SK-N-SH (cell line): ENCODE measurements at regions of chr1 and their contacts with region 1.

Region 1: DNA sequence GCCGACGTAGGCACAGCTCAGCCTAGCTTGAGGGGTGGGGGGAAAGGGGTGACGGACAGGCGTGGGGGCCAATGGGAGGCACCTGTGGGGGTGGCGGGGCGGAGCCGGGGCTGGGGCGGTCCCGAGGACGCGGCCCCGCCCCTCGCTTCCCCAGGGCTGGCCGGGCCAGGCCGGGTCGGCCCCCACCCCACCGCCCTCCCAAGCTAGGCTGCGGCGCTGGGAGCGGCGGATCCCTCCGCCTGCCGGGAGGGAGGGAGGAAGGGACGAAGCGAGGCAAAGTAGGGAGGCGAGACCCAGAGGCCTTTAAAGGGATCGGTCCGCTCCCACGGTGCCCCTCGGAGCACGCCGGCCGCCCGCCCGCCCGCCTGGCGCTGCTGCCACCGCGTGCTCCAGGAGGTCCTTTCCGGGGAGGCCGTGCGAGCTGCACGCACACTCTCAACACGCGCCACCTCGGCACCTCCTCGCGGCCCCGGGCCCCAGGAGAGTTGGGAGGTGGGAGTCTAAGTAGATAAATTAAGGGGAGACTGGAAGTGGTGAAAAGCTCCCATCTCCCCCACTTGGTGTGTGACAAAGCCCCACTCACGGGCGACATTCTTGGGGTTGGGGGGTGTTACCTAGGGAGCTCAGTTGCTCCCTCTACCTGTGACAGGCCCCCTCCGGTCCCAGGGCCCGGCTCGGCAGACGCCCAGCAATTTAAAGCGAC is 373 bp upstream of the MEF2D start:
- DNase-seq: peak; percentile 99
- H3K4me3 ChIP-seq: peak overlapping the region; percentile 89 to 97
- H3K27ac ChIP-seq: peak overlapping the region; percentile 98 to 100
- H3K4me1 ChIP-seq: peaks cover 59 to 76% of the 10 kb centered on the region in 2 experiments
- H3K27me3 ChIP-seq: no peaks in the 10 kb centered on the region
- CTCF ChIP-seq: peak; percentile 59
- EP300 ChIP-seq: 0 out of 4 replicates have a peak, but pooled peaks of 1 of the 2 experiments have one; percentile 38
- RAD21 ChIP-seq: peak; percentile 35

Region 2: DNA sequence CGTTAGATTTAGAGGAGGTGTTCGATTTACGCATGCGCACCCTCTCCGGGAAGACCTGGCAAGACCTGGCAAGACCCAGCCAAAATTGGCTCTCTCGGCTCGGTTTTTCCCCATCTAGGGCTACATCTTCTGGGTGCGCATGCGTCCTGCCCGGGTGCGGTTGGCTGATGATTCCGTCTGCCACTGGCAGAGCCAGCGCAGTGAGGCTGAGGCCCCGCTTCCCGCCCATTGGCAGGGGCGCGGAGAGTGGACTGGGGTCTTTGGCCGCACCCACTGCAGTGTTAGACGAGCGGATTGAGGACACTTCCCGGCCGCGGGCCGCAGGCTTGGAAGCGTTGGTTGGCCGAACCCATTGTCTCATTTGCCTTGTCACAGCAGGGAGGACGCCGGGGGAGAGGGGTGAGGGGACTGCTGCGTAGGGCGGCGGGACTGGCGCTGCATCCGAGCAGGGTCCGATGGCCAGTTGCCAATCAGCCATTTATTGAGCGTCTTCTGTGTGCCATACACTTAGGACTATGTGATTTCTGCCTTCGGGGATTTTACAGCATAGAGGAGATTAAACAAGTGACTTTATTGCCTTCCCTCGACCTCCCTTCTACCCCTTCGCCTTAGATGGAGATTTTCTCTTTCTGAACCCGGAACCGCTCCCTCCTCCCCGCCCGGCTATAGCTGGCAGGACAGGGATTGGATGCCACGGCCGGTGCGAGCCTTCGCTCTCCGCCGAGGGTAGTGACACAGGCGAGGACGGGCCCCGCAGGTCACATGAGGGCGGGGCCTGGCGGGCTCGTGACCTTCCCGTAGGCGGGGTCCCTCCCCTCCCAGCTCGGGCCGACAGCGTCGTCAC is 44.1 kb before region 1 on chr1:
- CTCF ChIA-PET with region 1: interaction called, 9 read pairs
- POLR2A ChIA-PET with region 1: interaction called, 14 read pairs
- DNase-seq: peak; percentile 96
- H3K4me3 ChIP-seq: peak overlapping the region; percentile 56 to 70
- H3K27ac ChIP-seq: peak overlapping the region; percentile 96 to 97
- H3K4me1 ChIP-seq: peaks cover 3 to 5% of the 10 kb centered on the region in 2 experiments; a peak in 2 of 4 replicates
- H3K27me3 ChIP-seq: no peaks in the 10 kb centered on the region
- CTCF ChIP-seq: no peak
- EP300 ChIP-seq: no peak
- RAD21 ChIP-seq: no peak

Region 3: DNA sequence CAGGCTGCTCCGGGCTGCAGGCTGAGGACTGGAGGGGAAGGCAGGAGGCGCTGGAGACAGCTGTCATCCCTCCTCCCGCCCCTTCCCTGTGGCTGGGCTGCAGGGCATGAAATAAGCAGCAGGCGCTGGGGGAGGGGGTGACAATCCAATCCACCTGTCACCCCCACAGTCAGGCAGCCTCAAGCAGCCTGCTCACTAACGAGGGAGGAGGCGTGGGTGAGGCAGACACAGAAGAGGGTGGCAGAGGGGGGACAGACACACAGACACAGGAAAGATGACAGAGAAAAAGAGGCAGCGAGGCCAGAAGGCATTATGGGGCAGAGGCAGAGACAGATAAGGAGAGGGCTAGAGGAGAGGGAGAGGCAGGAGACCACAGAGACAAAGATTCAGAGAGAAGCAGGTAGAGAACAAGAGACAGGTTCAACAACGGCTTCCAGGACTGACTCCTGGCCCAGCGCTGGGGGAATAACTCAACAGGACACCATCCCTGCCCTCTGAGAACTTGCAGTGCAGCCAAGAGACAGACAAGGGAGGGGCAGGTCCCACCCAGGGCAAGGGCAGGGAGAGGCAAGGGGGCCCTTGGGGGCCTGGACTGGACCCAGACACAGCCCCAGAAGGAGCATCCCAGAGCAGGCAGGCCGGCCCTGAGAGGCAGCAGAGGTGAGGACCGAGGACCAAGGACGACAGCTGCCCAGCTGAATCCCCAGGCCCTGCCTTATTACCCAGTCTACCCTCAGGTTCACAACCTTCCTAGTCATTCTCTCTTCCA is 11.6 kb before region 1 on chr1:
- CTCF ChIA-PET with region 1: interaction called, 24 read pairs
- POLR2A ChIA-PET with region 1: interaction called, 3 read pairs
- DNase-seq: peak; percentile 54
- H3K4me3 ChIP-seq: 0 out of 4 replicates have a peak overlapping the region, but pooled peaks of 1 of the 2 experiments have one; percentile 1
- H3K27ac ChIP-seq: peak overlapping the region; percentile 14 to 35; a peak in 2 of 4 replicates
- H3K4me1 ChIP-seq: peaks cover 30 to 65% of the 10 kb centered on the region in 2 experiments; a peak in 3 of 4 replicates
- H3K27me3 ChIP-seq: no peaks in the 10 kb centered on the region
- CTCF ChIP-seq: no peak
- EP300 ChIP-seq: no peak
- RAD21 ChIP-seq: no peak